ENCODE measurements at regions of chr4 and their contacts with region 1.

Region 1: DNA sequence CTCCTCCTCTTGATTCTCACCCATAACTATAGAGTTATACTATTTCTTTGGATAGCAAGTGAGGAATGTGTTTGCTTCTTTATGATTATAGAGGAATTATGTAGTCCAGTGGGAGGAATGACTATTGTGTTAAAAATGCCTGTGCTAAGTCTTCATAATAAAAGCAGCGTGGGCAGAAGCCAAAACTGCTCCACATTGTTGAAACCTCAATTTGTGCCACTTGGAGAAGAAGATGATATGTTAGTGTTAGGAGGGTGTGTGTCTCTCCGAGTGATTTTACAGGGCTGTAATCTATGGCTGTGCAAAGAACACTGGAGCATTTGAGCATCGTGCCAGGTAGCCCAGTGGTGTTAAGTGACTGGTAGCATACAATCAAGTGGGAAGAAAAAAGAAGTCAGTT is 74.3 kb downstream of the FRAS1 start:
- DNase-seq: no peak
- ATAC-seq: no peak
- H3K4me3 ChIP-seq: no peak overlapping the region
- H3K27ac ChIP-seq: no peak overlapping the region
- H3K4me1 ChIP-seq: no peaks in the 10 kb centered on the region
- H3K27me3 ChIP-seq: no peaks in the 10 kb centered on the region; a peak in 1 of 4 replicates
- CTCF ChIP-seq: no peak
- EP300 ChIP-seq: no peak
- POLR2A ChIP-seq: no peak
- RAD21 ChIP-seq: no peak

Region 2: DNA sequence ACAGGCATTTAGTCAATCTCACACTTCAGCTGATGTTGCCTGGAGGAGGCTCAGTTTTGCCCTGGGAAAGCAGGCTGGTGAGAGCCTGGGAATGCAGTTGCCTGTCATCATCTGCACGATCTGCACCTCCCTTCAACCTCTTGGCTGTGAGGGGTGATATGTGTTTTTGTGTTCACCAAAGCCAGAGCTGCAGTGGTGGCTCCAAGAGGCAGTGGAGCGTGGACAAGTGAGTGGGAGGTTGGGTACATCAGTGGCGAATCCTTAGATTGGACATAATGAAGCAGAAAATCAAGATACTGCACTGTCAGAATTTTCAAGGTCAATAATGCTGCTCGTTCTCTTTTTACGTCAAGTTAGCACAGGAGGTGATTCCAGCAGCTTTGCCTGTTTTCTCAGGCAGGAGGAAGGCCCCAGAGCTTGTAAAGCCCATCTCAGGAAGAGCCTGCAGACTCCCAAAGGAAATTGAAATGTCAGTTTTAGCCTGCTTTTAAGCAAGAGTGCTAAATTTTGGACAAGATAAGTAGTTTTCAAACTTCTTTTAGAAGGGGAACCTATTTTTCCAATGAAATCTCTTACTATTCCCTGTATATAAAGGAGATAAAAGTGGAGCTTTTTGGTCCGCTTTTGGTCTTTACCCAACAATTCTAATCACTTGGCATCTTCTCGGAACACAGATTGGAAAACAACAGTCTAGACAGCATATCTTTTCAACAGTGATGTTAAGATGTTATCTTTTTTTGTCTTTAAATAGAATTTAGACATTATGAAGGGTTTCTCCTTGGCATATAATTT is 18.5 kb after region 1 on chr4:
- CTCF ChIA-PET with region 1: interaction called, 4 read pairs
- POLR2A ChIA-PET with region 1: interaction called, 4 read pairs
- RAD21 ChIA-PET with region 1: interaction called, 3 read pairs
- SMC1A ChIA-PET with region 1: interaction called, 10 read pairs
- in situ Hi-C with region 1: no loop called
- intact Hi-C with region 1: no loop called
- DNase-seq: no peak
- ATAC-seq: no peak
- H3K4me3 ChIP-seq: no peak overlapping the region
- H3K27ac ChIP-seq: no peak overlapping the region
- H3K4me1 ChIP-seq: no peaks in the 10 kb centered on the region
- H3K27me3 ChIP-seq: no peaks in the 10 kb centered on the region
- CTCF ChIP-seq: no peak
- EP300 ChIP-seq: no peak
- POLR2A ChIP-seq: no peak
- RAD21 ChIP-seq: no peak

Region 3: GRCh38 chr4:78426972-78427371 is 295.6 kb after region 1 on chr4:
- CTCF ChIA-PET with region 1: no interaction called
- POLR2A ChIA-PET with region 1: no interaction called
- RAD21 ChIA-PET with region 1: no interaction called
- SMC1A ChIA-PET with region 1: no interaction called
- in situ Hi-C with region 1: no loop called
- intact Hi-C with region 1: no loop called
- DNase-seq: peak; percentile 11
- ATAC-seq: no peak; the same call in 1 of the 3 replicates
- H3K4me3 ChIP-seq: no peak overlapping the region
- H3K27ac ChIP-seq: no peak overlapping the region
- H3K4me1 ChIP-seq: no peaks in the 10 kb centered on the region
- H3K27me3 ChIP-seq: no peaks in the 10 kb centered on the region; a peak in 1 of 4 replicates
- CTCF ChIP-seq: no peak
- EP300 ChIP-seq: no peak
- POLR2A ChIP-seq: no peak
- RAD21 ChIP-seq: no peak